B cell (primary cell): ENCODE measurements at regions of chr7 and their contacts with region 1.

Region 1: GRCh38 chr7:7157177-7157886 is 25.0 kb upstream of the C1GALT1 start:
- DNase-seq: peak; percentile 68
- ATAC-seq: peak; percentile 91
- H3K4me3 ChIP-seq: peak overlapping the region; percentile 49 to 90 (median 61)
- H3K4me3 Mint-ChIP-seq: peak overlapping the region; percentile 90
- H3K27ac ChIP-seq: peak overlapping the region; percentile 64 to 80
- H3K27ac Mint-ChIP-seq: peak overlapping the region; percentile 94
- H3K4me1 ChIP-seq: peaks cover 33 to 34% of the 10 kb centered on the region in 2 donors
- H3K4me1 Mint-ChIP-seq: peaks cover 57% of the 10 kb centered on the region
- H3K27me3 ChIP-seq: no peaks in the 10 kb centered on the region
- H3K27me3 Mint-ChIP-seq: no peaks in the 10 kb centered on the region
- CTCF ChIP-seq: no peak

Region 2: DNA sequence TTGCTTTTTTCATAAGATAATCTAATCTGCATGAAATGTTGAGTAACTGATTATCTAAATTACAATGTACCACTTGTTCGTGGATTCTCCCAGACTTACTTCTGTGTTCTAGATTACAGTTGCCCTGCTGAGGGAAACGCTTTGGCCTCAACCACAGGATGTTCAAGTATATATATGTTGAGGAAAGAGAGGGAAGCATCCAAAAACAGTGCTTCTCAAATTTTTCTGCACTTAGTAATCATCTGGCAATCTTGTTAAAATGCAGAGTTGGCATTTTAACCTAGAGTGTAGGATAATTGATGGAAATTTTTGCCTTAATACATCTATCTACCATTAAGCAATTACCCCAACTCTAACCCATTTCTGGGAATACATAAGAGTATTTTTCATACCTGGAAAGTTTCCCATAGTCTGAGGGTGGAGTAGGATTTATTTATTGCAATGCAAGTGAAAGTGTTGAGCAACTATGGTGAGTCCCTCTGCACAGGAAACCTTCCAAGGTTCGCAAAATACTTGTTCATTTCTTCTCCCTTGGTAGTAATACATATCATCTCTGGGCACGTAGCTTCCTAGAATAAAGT is 34.5 kb before region 1 on chr7:
- CTCF ChIA-PET with region 1: no interaction called
- POLR2A ChIA-PET with region 1: interaction called, 5 read pairs
- intact Hi-C with region 1: loop called (anchors 5 kb)
- DNase-seq: no peak
- ATAC-seq: no peak
- H3K4me3 ChIP-seq: no peak overlapping the region
- H3K4me3 Mint-ChIP-seq: no peak overlapping the region
- H3K27ac ChIP-seq: no peak overlapping the region
- H3K27ac Mint-ChIP-seq: no peak overlapping the region
- H3K4me1 ChIP-seq: no peaks in the 10 kb centered on the region
- H3K4me1 Mint-ChIP-seq: peaks cover 4% of the 10 kb centered on the region
- H3K27me3 ChIP-seq: no peaks in the 10 kb centered on the region
- H3K27me3 Mint-ChIP-seq: no peaks in the 10 kb centered on the region
- CTCF ChIP-seq: no peak

Region 3: DNA sequence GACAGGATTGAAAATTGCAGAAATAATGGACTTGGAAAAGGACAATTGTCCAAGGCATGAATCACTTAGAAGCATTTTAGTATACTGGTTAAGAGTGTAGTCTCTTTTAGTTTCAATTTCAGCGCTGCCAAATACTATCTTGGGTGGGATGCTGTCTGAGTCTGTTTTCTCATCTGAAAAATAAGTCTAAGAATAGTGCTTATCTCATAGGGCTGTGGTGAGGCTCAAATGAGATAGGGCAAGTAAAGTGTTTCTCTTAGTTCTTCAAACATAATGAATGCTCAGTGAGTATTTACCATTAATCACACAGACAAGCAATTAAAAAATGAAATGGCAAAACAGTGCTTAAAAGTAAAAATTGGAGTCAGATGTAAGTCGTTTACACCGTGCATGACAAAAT is 20.9 kb before region 1 on chr7:
- CTCF ChIA-PET with region 1: no interaction called
- POLR2A ChIA-PET with region 1: no interaction called
- intact Hi-C with region 1: no loop called
- DNase-seq: peak; percentile 18
- ATAC-seq: peak; percentile 64
- H3K4me3 ChIP-seq: no peak overlapping the region
- H3K4me3 Mint-ChIP-seq: peak overlapping the region; percentile 62
- H3K27ac ChIP-seq: peak overlapping the region; percentile 7 to 33
- H3K27ac Mint-ChIP-seq: peak overlapping the region; percentile 82
- H3K4me1 ChIP-seq: peaks cover 4 to 10% of the 10 kb centered on the region in 2 donors
- H3K4me1 Mint-ChIP-seq: peaks cover 19% of the 10 kb centered on the region
- H3K27me3 ChIP-seq: no peaks in the 10 kb centered on the region
- H3K27me3 Mint-ChIP-seq: no peaks in the 10 kb centered on the region
- CTCF ChIP-seq: no peak

Region 4: GRCh38 chr7:7146837-7147236 is 10.5 kb before region 1 on chr7:
- CTCF ChIA-PET with region 1: no interaction called
- POLR2A ChIA-PET with region 1: no interaction called
- intact Hi-C with region 1: no loop called
- DNase-seq: no peak
- ATAC-seq: no peak
- H3K4me3 ChIP-seq: no peak overlapping the region
- H3K4me3 Mint-ChIP-seq: no peak overlapping the region
- H3K27ac ChIP-seq: no peak overlapping the region
- H3K27ac Mint-ChIP-seq: no peak overlapping the region
- H3K4me1 ChIP-seq: peaks cover under 1 to 5% of the 10 kb centered on the region in 2 donors
- H3K4me1 Mint-ChIP-seq: peaks cover 8% of the 10 kb centered on the region
- H3K27me3 ChIP-seq: no peaks in the 10 kb centered on the region
- H3K27me3 Mint-ChIP-seq: no peaks in the 10 kb centered on the region
- CTCF ChIP-seq: no peak

Region 5: GRCh38 chr7:7251742-7252141 is 94.4 kb after region 1 on chr7:
- CTCF ChIA-PET with region 1: no interaction called
- POLR2A ChIA-PET with region 1: no interaction called
- intact Hi-C with region 1: loop called (anchors 1 kb)
- DNase-seq: peak; percentile 88
- ATAC-seq: peak; percentile 99
- H3K4me3 ChIP-seq: peak overlapping the region in 2 of 5 experiments; percentile 7 to 43
- H3K4me3 Mint-ChIP-seq: peak overlapping the region; percentile 73
- H3K27ac ChIP-seq: peak overlapping the region; percentile 74 to 75
- H3K27ac Mint-ChIP-seq: peak overlapping the region; percentile 96
- H3K4me1 ChIP-seq: peaks cover 37 to 78% of the 10 kb centered on the region in 2 donors
- H3K4me1 Mint-ChIP-seq: peaks cover 76% of the 10 kb centered on the region
- H3K27me3 ChIP-seq: no peaks in the 10 kb centered on the region
- H3K27me3 Mint-ChIP-seq: no peaks in the 10 kb centered on the region
- CTCF ChIP-seq: no peak

Region 6: GRCh38 chr7:7257899-7258692 is 100.8 kb after region 1 on chr7:
- CTCF ChIA-PET with region 1: interaction called, 3 read pairs
- POLR2A ChIA-PET with region 1: no interaction called
- intact Hi-C with region 1: loop called (anchors 1 kb)
- DNase-seq: peak; percentile 61
- ATAC-seq: peak; percentile 74
- H3K4me3 ChIP-seq: peak overlapping the region; percentile 12 to 63 (median 51)
- H3K4me3 Mint-ChIP-seq: peak overlapping the region; percentile 71
- H3K27ac ChIP-seq: peak overlapping the region; percentile 80 to 81
- H3K27ac Mint-ChIP-seq: peak overlapping the region; percentile 89
- H3K4me1 ChIP-seq: peaks cover 52 to 56% of the 10 kb centered on the region in 2 donors
- H3K4me1 Mint-ChIP-seq: peaks cover 61% of the 10 kb centered on the region
- H3K27me3 ChIP-seq: no peaks in the 10 kb centered on the region
- H3K27me3 Mint-ChIP-seq: no peaks in the 10 kb centered on the region
- CTCF ChIP-seq: no peak

Region 7: DNA sequence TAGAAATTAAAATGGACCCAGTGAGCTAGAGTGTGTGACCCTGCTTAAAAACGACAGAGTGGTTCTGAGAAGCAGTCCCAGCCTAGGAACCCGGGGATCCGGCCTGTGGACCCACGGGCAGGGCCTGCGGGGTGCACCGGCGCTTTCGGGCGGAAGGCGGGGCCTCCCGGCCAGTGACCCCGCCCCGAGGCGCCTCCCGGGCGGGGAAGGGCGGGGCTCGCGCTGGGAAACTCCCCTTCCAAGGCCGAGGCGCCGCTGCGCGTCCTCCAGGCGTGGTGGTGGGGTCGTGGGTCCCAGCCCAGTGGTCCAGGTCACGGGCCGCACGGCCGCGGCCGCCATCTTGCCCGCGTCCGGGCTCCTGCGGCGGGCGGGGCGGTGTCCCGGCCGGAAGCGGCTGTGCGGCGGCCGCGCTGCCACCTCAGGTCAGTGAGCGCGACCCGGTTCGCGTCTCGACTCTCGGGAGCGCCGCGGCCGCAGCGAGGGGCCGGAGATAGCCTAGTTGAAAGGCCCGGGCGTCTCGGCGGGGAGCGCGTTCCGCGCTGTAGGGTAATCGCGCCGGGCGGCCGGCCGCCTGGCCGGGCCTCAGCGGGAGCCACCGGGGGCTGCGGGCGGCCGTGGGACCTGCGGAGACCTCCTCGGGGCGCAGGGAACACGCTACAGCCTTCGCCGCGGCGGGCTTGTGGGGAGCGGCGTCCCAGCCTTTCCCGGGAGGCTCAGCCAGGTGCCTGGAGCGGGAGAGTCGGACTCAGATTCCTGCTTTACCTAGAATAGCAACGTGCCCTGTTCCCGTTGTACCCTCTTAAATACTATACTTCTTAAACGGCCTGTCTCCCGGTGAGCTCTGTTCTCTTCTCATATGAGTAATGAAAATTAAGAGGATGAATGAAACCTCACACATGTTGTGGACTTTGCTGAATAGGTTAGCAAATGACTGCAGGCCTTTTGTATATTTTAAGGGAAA is 409.6 kb after region 1 on chr7 and contains the start of gene MIOS:
- CTCF ChIA-PET with region 1: interaction called, 3 read pairs
- POLR2A ChIA-PET with region 1: no interaction called
- intact Hi-C with region 1: loop called (anchors 2 kb)
- DNase-seq: peak; percentile 92
- ATAC-seq: peak; percentile 85
- H3K4me3 ChIP-seq: peak within 1 kb of the TSS; percentile 65 to 94 (median 81)
- H3K4me3 Mint-ChIP-seq: peak within 1 kb of the TSS; percentile 83
- H3K27ac ChIP-seq: peak within 1 kb of the TSS; percentile 93 to 99
- H3K27ac Mint-ChIP-seq: peak within 1 kb of the TSS; percentile 90
- H3K4me1 ChIP-seq: peaks cover 41 to 44% of the 10 kb centered on the region in 2 donors
- H3K4me1 Mint-ChIP-seq: peaks cover 35% of the 10 kb centered on the region
- H3K27me3 ChIP-seq: no peaks in the 10 kb centered on the region
- H3K27me3 Mint-ChIP-seq: no peaks in the 10 kb centered on the region
- CTCF ChIP-seq: no peak
- total RNA-seq, gene MIOS: 48.7 and 50.1 TPM in 2 replicates